ENCODE measurements at regions of chr19 and their contacts with region 1.

Region 1: GRCh38 chr19:56350416-56351045 is 35.9 kb upstream of the ZSCAN5A start:
- DNase-seq: peak; percentile 37
- CTCF ChIP-seq: peak; percentile 82

Region 2: GRCh38 chr19:56301182-56301581 is 49.3 kb before region 1 on chr19:
- CTCF ChIA-PET with region 1: no interaction called
- POLR2A ChIA-PET with region 1: no interaction called
- DNase-seq: no peak
- CTCF ChIP-seq: no peak

Region 3: GRCh38 chr19:56360841-56361240 is 10.3 kb after region 1 on chr19:
- CTCF ChIA-PET with region 1: interaction called, 15 read pairs
- POLR2A ChIA-PET with region 1: no interaction called
- DNase-seq: no peak
- CTCF ChIP-seq: no peak

Region 4: GRCh38 chr19:56383826-56384605 is 33.5 kb after region 1 on chr19:
- CTCF ChIA-PET with region 1: no interaction called
- POLR2A ChIA-PET with region 1: no interaction called
- DNase-seq: no peak
- CTCF ChIP-seq: no peak

Region 5: DNA sequence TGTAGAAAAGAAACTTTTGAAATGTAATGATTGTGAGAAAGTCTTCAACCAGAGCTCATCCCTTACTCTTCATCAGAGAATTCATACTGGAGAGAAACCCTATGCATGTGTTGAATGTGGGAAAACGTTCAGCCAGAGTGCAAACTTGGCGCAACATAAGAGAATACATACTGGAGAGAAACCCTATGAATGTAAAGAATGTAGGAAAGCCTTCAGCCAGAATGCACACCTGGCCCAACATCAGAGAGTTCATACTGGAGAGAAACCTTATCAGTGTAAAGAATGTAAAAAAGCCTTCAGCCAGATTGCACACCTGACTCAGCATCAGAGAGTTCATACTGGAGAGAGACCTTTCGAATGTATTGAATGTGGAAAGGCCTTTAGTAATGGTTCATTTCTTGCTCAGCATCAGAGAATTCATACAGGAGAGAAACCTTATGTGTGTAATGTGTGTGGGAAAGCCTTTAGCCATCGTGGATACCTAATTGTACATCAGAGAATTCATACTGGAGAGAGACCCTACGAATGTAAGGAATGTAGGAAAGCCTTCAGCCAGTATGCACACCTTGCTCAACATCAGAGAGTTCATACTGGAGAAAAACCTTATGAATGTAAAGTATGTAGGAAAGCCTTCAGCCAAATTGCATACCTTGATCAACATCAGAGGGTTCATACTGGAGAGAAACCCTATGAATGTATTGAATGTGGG is 72.9 kb after region 1 on chr19:
- CTCF ChIA-PET with region 1: no interaction called
- POLR2A ChIA-PET with region 1: no interaction called
- DNase-seq: no peak
- CTCF ChIP-seq: no peak

Region 6: DNA sequence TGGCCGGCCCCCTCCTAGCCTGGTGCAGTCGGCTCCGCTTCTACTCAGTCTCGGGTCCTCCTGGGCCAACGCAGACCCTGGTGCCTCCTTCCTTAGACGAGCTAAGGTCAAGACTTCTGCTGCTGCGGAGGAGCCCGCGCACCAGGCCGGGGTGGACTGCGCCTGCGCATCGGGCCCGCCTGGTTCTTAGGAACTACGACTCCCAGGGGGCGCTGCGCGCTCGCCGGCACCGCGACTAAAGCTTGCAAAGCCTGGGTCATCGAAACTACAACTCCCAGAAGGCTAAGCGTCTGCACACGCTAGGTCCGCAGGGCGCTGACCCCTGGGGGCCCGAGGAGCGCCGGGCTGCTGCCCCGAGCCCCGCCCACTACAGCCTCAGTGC is 321.1 kb after region 1 on chr19 and contains the start of gene ZNF835:
- CTCF ChIA-PET with region 1: no interaction called
- POLR2A ChIA-PET with region 1: no interaction called
- DNase-seq: peak; percentile 31
- CTCF ChIP-seq: no peak